ENCODE measurements at regions of chr3 and their contacts with region 1.

Region 1: DNA sequence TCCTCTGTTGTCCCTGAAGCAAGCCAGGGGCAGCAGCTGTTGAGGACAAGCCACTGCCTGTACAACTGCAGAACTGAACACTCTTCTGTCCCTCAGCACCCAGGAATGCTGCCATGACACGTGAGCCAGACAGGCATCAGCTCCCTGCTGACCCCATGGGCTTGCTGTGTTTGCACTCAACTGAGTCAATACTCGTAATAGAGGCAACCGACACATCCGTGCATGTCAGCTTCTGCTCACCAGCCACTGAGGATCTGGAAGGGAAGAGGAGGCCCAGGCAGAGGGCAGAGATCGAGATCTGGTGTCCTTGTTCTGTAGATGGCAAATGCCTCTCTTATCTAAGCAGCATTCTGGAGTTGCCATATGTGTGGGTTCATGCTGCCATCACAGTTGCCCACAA is 54.3 kb upstream of the SEC61A1 start:
- DNase-seq: no peak
- H3K27ac ChIP-seq: no peak overlapping the region
- CTCF ChIP-seq: no peak

Region 2: DNA sequence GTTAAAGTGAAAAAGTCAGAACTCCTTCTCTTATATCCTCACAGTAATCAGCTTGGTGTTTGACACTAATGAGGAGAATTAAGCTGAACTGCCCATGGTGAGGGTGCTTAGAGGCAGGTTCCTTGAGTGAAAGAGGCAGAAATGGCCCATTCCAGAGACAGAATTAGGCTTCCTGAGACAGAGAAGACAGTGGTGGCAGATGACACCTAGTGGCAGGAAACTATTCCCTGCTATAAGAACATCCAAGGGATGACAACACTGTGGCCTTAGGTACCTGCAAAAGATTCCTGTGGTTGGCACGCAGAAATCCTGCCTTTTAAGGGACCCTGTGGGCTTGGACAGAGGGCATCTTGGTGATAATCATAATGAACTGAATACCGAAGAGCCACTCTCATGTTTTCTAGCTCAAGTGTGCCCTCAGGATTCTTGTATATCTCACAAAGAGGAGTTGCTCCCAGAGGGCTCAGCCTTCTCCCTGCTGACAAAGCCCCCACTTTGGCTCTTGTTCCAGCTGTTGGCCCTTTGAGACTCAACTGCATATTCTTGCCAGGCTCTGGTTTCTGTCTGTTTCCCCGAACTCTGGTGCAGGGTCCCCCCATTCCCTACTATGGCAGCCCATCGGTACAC is 26.9 kb before region 1 on chr3:
- CTCF ChIA-PET with region 1: interaction called, 10 read pairs
- POLR2A ChIA-PET with region 1: no interaction called
- DNase-seq: peak; percentile 55
- H3K27ac ChIP-seq: no peak overlapping the region
- CTCF ChIP-seq: peak; percentile 80

Region 3: GRCh38 chr3:128033102-128033501 is 35.1 kb after region 1 on chr3:
- CTCF ChIA-PET with region 1: no interaction called
- POLR2A ChIA-PET with region 1: no interaction called
- DNase-seq: peak; percentile 29
- H3K27ac ChIP-seq: no peak overlapping the region
- CTCF ChIP-seq: no peak